ENCODE measurements at regions of chr16 and their contacts with region 1.

Region 1: GRCh38 chr16:8660841-8661301 is 13.5 kb upstream of the ABAT start:
- DNase-seq: peak; percentile 81
- H3K4me3 ChIP-seq: peak overlapping the region in 1 of 2 experiments; percentile 44; a peak in 1 of 4 replicates
- H3K27ac ChIP-seq: no peak overlapping the region
- H3K4me1 ChIP-seq: peaks cover 0 to 3% of the 10 kb centered on the region in 2 experiments; a peak in 1 of 4 replicates
- H3K27me3 ChIP-seq: no peaks in the 10 kb centered on the region
- CTCF ChIP-seq: peak; percentile 82
- EP300 ChIP-seq: no peak
- RAD21 ChIP-seq: peak; percentile 98

Region 2: DNA sequence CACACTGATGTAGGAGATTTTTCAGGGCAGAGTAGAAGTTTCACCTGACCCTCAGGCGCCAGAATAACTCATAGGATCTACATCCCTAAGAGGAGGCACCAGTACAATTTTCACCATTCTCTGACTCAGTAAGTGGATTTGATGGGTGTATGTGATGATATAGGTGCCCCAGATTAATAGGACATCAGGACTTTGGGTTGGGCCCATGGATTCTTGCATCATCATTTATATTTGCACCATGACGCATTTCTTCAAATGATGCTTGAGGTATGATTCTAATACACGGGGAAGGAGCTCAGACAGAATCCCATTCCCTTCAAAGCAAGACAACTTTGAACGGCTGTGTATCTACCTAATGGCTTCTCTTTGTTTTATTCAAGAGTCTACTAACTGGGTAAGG is 243.7 kb before region 1 on chr16:
- CTCF ChIA-PET with region 1: no interaction called
- POLR2A ChIA-PET with region 1: no interaction called
- DNase-seq: no peak
- H3K4me3 ChIP-seq: no peak overlapping the region
- H3K27ac ChIP-seq: no peak overlapping the region
- H3K4me1 ChIP-seq: no peaks in the 10 kb centered on the region
- H3K27me3 ChIP-seq: no peaks in the 10 kb centered on the region
- CTCF ChIP-seq: no peak
- EP300 ChIP-seq: no peak
- RAD21 ChIP-seq: no peak

Region 3: GRCh38 chr16:8634991-8635736 is 25.7 kb before region 1 on chr16:
- CTCF ChIA-PET with region 1: no interaction called
- POLR2A ChIA-PET with region 1: no interaction called
- DNase-seq: peak; percentile 60
- H3K4me3 ChIP-seq: no peak overlapping the region; a peak in 1 of 4 replicates
- H3K27ac ChIP-seq: no peak overlapping the region; a peak in 1 of 4 replicates
- H3K4me1 ChIP-seq: peaks cover 0 to 5% of the 10 kb centered on the region in 2 experiments; a peak in 1 of 4 replicates
- H3K27me3 ChIP-seq: no peaks in the 10 kb centered on the region
- CTCF ChIP-seq: peak; percentile 70
- EP300 ChIP-seq: no peak
- RAD21 ChIP-seq: peak; percentile 61

Region 4: GRCh38 chr16:8674413-8675022 is 13.6 kb after region 1 on chr16 and contains the start of gene ABAT:
- CTCF ChIA-PET with region 1: interaction called, 12 read pairs
- POLR2A ChIA-PET with region 1: no interaction called
- DNase-seq: peak; percentile 98
- H3K4me3 ChIP-seq: peak within 1 kb of the TSS; percentile 77 to 83
- H3K27ac ChIP-seq: peak within 1 kb of the TSS in 1 of 2 experiments; percentile 72; a peak in 1 of 4 replicates
- H3K4me1 ChIP-seq: peaks cover 20 to 32% of the 10 kb centered on the region in 2 experiments; a peak in 2 of 4 replicates
- H3K27me3 ChIP-seq: no peaks in the 10 kb centered on the region
- CTCF ChIP-seq: no peak
- EP300 ChIP-seq: no peak
- RAD21 ChIP-seq: no peak
- polyA plus RNA-seq, gene ABAT: 4.7 and 7.3 TPM in 2 replicates

Region 5: GRCh38 chr16:8776129-8776584 is 115.3 kb after region 1 on chr16:
- CTCF ChIA-PET with region 1: interaction called, 30 read pairs
- POLR2A ChIA-PET with region 1: no interaction called
- DNase-seq: no peak
- H3K4me3 ChIP-seq: no peak overlapping the region
- H3K27ac ChIP-seq: no peak overlapping the region
- H3K4me1 ChIP-seq: no peaks in the 10 kb centered on the region
- H3K27me3 ChIP-seq: no peaks in the 10 kb centered on the region
- CTCF ChIP-seq: no peak
- EP300 ChIP-seq: no peak
- RAD21 ChIP-seq: no peak

Region 6: DNA sequence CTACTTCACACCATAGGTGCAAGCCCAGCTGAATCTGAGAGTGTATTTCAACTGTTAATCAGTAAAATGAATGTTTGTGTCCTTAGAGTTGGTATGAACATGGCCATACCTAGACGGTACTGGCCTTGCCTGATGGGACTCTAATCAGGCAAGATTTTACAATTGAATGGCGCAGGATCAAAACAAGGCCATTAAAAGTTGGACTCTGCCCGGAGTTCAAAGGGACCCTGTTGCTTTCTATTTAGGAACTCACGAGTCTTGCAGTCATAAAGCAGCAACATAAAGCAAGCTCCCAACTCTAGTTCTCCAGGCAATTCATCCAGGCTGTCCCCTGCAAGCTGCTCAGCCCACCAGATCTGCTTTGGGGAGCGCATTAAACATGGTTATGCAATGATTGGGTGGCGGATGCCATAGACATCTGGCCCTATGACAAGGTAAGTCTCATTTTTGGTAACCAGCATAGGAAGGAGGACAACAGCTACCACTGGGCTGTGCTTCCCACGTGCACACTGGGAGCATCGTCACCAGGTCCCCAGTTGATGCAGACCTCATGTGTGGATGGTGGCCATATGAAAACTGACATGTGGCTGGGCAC is 127.8 kb after region 1 on chr16:
- CTCF ChIA-PET with region 1: interaction called, 175 read pairs
- POLR2A ChIA-PET with region 1: no interaction called
- DNase-seq: no peak
- H3K4me3 ChIP-seq: no peak overlapping the region
- H3K27ac ChIP-seq: no peak overlapping the region
- H3K4me1 ChIP-seq: no peaks in the 10 kb centered on the region; a peak in 1 of 4 replicates
- H3K27me3 ChIP-seq: no peaks in the 10 kb centered on the region
- CTCF ChIP-seq: no peak
- EP300 ChIP-seq: no peak
- RAD21 ChIP-seq: no peak

Region 7: GRCh38 chr16:8797364-8798173 is 136.7 kb after region 1 on chr16 and contains the starts of genes PMM2 and TMEM186:
- CTCF ChIA-PET with region 1: interaction called, 175 read pairs
- POLR2A ChIA-PET with region 1: no interaction called
- DNase-seq: peak; percentile 98
- H3K4me3 ChIP-seq: peak within 1 kb of the TSS; percentile 86 to 94
- H3K27ac ChIP-seq: peak within 1 kb of the TSS; percentile 78 to 88
- H3K4me1 ChIP-seq: peaks cover 0 to 27% of the 10 kb centered on the region in 2 experiments
- H3K27me3 ChIP-seq: no peaks in the 10 kb centered on the region
- CTCF ChIP-seq: no peak
- EP300 ChIP-seq: peak in 1 of 2 experiments; percentile 17; a peak in 1 of 4 replicates
- RAD21 ChIP-seq: no peak
- polyA plus RNA-seq, gene PMM2: 24.3 and 27.6 TPM in 2 replicates
- polyA plus RNA-seq, gene TMEM186: 13.2 and 18.2 TPM in 2 replicates

Measured in SK-N-SH (cell line).